ENCODE measurements at regions of chr7 and their contacts with region 1.

Region 1: GRCh38 chr7:120733143-120733542 is 124.8 kb downstream of the TSPAN12 start:
- DNase-seq: no peak
- H3K4me3 ChIP-seq: no peak overlapping the region
- H3K27ac ChIP-seq: peak overlapping the region in 3 of 4 donors; percentile 53 to 76 (median 59)
- H3K4me1 ChIP-seq: peaks cover 0 to 57% (median 23%) of the 10 kb centered on the region in 4 donors
- H3K27me3 ChIP-seq: no peaks in the 10 kb centered on the region
- CTCF ChIP-seq: no peak
- EP300 ChIP-seq: no peak
- POLR2A ChIP-seq: no peak

Region 2: GRCh38 chr7:120645966-120646365 is 87.2 kb before region 1 on chr7:
- intact Hi-C with region 1: no loop called
- DNase-seq: no peak
- H3K4me3 ChIP-seq: no peak overlapping the region
- H3K27ac ChIP-seq: no peak overlapping the region
- H3K4me1 ChIP-seq: no peaks in the 10 kb centered on the region
- H3K27me3 ChIP-seq: no peaks in the 10 kb centered on the region
- CTCF ChIP-seq: no peak
- EP300 ChIP-seq: no peak
- POLR2A ChIP-seq: no peak

Region 3: GRCh38 chr7:121081327-121081936 is 348.3 kb after region 1 on chr7:
- intact Hi-C with region 1: loop called (anchors 10 kb)
- DNase-seq: no peak
- H3K4me3 ChIP-seq: no peak overlapping the region
- H3K27ac ChIP-seq: peak overlapping the region in 3 of 4 donors; percentile 10 to 79 (median 78)
- H3K4me1 ChIP-seq: peaks cover 0 to 48% (median 39%) of the 10 kb centered on the region in 4 donors
- H3K27me3 ChIP-seq: no peaks in the 10 kb centered on the region
- CTCF ChIP-seq: peak; percentile 64 to 77 (median 75)
- EP300 ChIP-seq: no peak
- POLR2A ChIP-seq: no peak

Measured in sigmoid colon (tissue), 7 donors.